ENCODE measurements at regions of chr2 and their contacts with region 1.

Region 1: DNA sequence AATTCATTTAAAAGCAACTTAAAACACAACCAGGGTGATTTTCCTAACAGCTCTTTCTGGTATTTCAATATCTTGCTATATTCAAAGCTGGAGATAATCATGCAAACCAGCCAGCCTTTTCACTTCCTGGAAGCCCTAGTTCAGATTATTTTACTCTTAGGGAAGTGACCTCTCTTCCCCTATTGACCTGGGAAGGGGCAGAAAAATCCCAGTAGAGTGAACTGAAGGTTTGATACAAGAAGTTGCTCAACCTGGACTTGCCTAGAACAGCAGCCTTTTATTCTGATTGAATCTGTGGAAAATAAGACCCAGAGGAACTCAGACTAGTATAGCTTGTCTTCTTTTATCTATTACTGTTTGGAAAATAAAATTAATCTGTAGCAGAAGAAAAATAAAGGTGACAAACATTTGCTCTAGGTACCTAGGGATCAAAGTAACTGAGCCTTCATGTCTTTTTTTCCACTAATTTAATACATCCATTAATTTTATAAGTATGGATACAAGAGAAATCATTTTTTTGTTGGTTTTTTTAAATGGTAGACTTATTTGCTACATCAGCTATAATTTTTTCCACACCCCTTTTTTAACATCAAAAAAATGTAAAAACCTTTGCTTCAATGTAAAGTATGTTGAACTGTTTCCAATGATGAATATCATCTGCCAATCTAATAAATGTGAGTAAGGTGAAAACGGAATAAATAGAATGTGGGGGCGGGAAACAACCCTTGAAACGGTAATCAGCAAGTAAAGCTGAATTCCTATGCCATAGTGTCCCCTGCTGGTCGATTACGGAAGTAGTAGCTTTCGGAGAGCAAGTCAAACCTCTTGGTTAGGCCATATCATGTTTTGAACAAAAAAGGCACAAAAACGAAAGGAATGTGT is 629.9 kb downstream of the NRXN1 start:
- DNase-seq: peak in 1 of 9 experiments; percentile 1
- ATAC-seq: no peak
- H3K4me3 ChIP-seq: no peak overlapping the region
- H3K4me3 Mint-ChIP-seq: no peak overlapping the region
- H3K27ac ChIP-seq: no peak overlapping the region
- H3K27ac Mint-ChIP-seq: no peak overlapping the region
- H3K4me1 ChIP-seq: no peaks in the 10 kb centered on the region
- H3K4me1 Mint-ChIP-seq: no peaks in the 10 kb centered on the region
- H3K27me3 ChIP-seq: no peaks in the 10 kb centered on the region
- H3K27me3 Mint-ChIP-seq: no peaks in the 10 kb centered on the region
- CTCF ChIP-seq: no peak

Region 2: DNA sequence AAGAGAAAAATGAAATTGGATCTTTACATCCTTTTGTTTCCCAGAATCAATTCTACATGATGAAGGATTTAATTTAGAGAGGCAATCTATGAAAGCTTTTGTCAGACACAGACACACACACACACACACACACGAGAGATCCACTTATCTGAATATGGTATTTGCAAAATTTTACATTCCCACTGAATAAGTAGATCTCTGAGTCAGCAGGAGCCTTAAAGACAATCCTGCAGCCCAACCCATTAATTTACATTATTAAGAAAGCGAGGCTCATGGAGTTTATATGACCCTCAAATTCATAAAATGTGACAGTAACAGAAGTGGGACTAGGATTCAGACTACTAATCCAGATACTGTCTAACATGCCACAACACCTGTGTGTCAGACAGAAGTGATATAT is 225.5 kb after region 1 on chr2:
- CTCF ChIA-PET with region 1: no interaction called
- POLR2A ChIA-PET with region 1: no interaction called
- intact Hi-C with region 1: no loop called
- DNase-seq: no peak
- ATAC-seq: no peak
- H3K4me3 ChIP-seq: no peak overlapping the region
- H3K4me3 Mint-ChIP-seq: no peak overlapping the region
- H3K27ac ChIP-seq: no peak overlapping the region
- H3K27ac Mint-ChIP-seq: no peak overlapping the region
- H3K4me1 ChIP-seq: no peaks in the 10 kb centered on the region
- H3K4me1 Mint-ChIP-seq: no peaks in the 10 kb centered on the region
- H3K27me3 ChIP-seq: no peaks in the 10 kb centered on the region
- H3K27me3 Mint-ChIP-seq: no peaks in the 10 kb centered on the region
- CTCF ChIP-seq: no peak

Region 3: GRCh38 chr2:50987616-50988313 is 585.8 kb after region 1 on chr2:
- CTCF ChIA-PET with region 1: no interaction called
- POLR2A ChIA-PET with region 1: no interaction called
- intact Hi-C with region 1: loop called in 1 of 2 experiments (anchors 5 kb)
- DNase-seq: no peak
- ATAC-seq: no peak
- H3K4me3 ChIP-seq: no peak overlapping the region
- H3K4me3 Mint-ChIP-seq: no peak overlapping the region
- H3K27ac ChIP-seq: no peak overlapping the region
- H3K27ac Mint-ChIP-seq: no peak overlapping the region
- H3K4me1 ChIP-seq: no peaks in the 10 kb centered on the region
- H3K4me1 Mint-ChIP-seq: no peaks in the 10 kb centered on the region
- H3K27me3 ChIP-seq: no peaks in the 10 kb centered on the region
- H3K27me3 Mint-ChIP-seq: no peaks in the 10 kb centered on the region
- CTCF ChIP-seq: no peak